Colonic mucosa (tissue), 4 donors: ENCODE measurements at regions of chr18 and their contacts with region 1.

Region 1: DNA sequence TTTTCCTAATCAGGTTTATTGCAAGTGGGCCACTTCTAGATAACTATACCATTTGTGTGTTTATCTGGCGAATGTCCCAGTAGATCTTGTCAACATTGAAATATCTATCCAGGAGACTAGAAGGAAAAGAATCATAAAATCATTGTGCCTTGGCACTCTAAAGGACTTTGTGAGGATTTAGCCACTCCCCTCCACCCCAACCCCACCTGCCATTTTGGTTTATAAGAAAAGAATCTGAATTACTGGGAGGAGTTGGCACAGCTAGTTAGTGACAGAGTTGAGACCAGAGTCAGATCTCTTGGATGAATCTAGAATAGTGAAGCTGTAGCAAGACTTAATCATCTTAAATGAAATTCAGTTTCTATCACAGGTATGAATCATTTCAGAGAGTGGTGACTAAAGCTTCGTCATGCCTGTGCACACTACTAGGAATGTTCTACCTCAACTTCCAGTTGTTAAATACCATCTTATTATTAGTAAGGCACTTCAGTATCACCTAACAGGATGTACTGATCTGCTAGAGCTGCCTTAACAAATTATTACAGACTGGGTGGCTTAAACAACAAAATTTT is 212.7 kb upstream of the SLC14A2 start:
- DNase-seq: peak; percentile 53
- H3K4me3 ChIP-seq: no peak overlapping the region
- H3K27ac ChIP-seq: no peak overlapping the region
- H3K4me1 ChIP-seq: no peaks in the 10 kb centered on the region
- H3K27me3 ChIP-seq: no peaks in the 10 kb centered on the region
- CTCF ChIP-seq: no peak

Region 2: GRCh38 chr18:43793910-43794309 is 1608.7 kb before region 1 on chr18:
- intact Hi-C with region 1: loop called (anchors 10 kb)
- DNase-seq: no peak
- H3K4me3 ChIP-seq: no peak overlapping the region
- H3K27ac ChIP-seq: no peak overlapping the region
- H3K4me1 ChIP-seq: no peaks in the 10 kb centered on the region
- H3K27me3 ChIP-seq: no peaks in the 10 kb centered on the region
- CTCF ChIP-seq: no peak